A673 (cell line): ENCODE measurements at regions of chr17 and their contacts with region 1.

Region 1: DNA sequence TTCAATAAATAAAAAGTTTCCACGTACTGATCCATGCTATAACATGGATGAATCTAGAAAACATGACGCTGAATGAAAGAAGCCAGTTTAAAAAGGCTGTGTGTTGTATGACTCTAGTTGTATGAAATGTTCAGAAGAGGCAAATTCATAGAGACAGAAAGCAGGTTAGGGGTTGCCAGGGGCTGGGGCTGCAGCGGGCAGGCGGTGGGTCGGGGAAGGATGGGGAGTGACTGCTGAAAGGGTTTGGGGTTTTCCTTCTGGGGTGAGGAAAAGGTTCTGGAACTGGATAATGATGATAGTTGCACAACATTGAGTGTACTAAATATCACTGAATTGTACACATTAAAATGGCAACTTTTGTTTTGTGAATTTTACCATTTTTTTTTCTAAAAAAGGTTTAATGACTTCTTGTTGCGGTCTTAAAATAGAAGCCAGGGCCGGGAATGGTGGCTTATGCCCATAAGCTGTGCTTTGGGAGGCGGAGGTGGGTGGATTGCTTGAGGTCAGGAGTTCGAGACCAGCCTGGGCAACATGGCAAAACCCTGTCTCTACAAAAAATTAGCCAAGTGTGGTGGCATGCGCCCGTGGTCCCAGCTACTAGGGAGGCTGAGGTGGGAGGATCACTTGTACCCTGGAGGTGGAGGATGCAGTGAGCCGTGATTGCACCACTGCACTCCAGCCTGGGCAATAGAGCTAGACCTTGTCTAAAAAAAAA is 36.4 kb downstream of the NOL11 start:
- DNase-seq: no peak
- H3K4me3 ChIP-seq: no peak overlapping the region
- H3K27ac ChIP-seq: no peak overlapping the region
- H3K4me1 ChIP-seq: no peaks in the 10 kb centered on the region
- H3K27me3 ChIP-seq: no peaks in the 10 kb centered on the region
- CTCF ChIP-seq: no peak

Region 2: DNA sequence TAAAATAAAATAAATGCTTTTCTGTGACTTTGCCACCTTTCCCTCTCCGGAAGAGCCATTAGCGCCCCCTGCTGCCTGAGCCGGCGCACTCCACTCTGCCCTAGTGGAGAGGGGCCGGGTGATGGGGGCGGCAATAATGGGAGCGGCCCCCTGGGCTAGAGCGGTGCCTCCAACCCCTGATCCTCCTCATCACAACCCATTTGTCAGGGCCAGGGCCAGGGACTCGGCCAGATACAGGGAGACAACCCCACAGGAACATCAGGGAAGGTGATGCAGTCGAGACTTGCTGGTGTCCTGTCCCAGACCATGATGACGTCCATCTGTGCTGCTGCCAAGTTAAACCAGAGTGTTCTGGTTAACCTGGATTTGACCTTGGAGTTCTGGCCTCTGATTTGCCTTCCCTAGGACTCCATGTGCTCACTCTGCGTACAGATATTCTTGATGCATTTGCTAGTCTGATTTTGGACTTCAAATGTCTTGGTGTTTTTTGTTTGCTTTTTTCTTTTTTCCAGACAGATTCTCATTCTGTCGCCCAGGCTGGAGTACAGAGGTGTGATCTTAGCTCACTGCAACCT is 25.0 kb after region 1 on chr17:
- CTCF ChIA-PET with region 1: no interaction called
- POLR2A ChIA-PET with region 1: no interaction called
- intact Hi-C with region 1: loop called (anchors 2 kb)
- DNase-seq: peak; percentile 60
- H3K4me3 ChIP-seq: no peak overlapping the region
- H3K27ac ChIP-seq: no peak overlapping the region
- H3K4me1 ChIP-seq: no peaks in the 10 kb centered on the region
- H3K27me3 ChIP-seq: no peaks in the 10 kb centered on the region
- CTCF ChIP-seq: peak; percentile 76